Heart left ventricle (tissue), 16 donors: ENCODE measurements at regions of chr7 and their contacts with region 1.

Region 1: DNA sequence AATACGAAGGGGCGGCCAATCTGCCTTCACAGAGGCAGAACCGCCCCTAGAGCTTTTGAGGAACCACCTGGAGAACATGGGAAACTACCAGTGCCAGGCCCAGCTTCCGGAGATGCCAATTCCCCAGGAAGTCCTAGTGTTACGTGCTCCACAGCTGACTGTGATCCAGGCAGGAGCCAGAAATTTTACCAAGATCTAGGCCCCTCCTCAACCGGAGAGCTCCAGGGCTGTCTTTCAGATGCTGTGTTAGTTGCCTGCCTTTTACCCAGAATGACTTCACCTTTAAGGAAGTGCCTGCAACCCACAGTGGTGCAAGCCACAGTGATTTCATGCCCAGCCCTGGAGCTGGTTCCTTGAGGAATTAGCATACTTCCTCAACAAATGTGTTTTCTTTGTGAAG is 62.9 kb downstream of the ELMO1 start:
- DNase-seq: peak in 3 of 5 donors; percentile 27 to 60 (median 45)
- ATAC-seq: peak; percentile 40 to 70 (median 50)
- H3K4me3 ChIP-seq: no peak overlapping the region
- H3K27ac ChIP-seq: peak overlapping the region in 6 of 12 donors; percentile 9 to 51 (median 34)
- H3K4me1 ChIP-seq: peaks cover 0 to 51% (median 16%) of the 10 kb centered on the region in 12 donors
- H3K27me3 ChIP-seq: no peaks in the 10 kb centered on the region
- CTCF ChIP-seq: no peak
- POLR2A ChIP-seq: no peak

Region 2: GRCh38 chr7:37683246-37684120 is 297.7 kb after region 1 on chr7 and contains the start of gene GPR141:
- intact Hi-C with region 1: no loop called
- DNase-seq: no peak
- ATAC-seq: peak in 2 of 4 donors; percentile 45 to 48
- H3K4me3 ChIP-seq: peak within 1 kb of the TSS in 2 of 12 donors; percentile 18 to 42
- H3K27ac ChIP-seq: peak within 1 kb of the TSS in 1 of 12 donors; percentile 79
- H3K4me1 ChIP-seq: peaks cover 0 to 26% (median 0%) of the 10 kb centered on the region in 12 donors
- H3K27me3 ChIP-seq: no peaks in the 10 kb centered on the region
- CTCF ChIP-seq: no peak
- POLR2A ChIP-seq: no peak
- total RNA-seq, gene GPR141: 0.38 to 5.2 (median 0.54) TPM in 7 of 9 donors, not detected in the others

Region 3: DNA sequence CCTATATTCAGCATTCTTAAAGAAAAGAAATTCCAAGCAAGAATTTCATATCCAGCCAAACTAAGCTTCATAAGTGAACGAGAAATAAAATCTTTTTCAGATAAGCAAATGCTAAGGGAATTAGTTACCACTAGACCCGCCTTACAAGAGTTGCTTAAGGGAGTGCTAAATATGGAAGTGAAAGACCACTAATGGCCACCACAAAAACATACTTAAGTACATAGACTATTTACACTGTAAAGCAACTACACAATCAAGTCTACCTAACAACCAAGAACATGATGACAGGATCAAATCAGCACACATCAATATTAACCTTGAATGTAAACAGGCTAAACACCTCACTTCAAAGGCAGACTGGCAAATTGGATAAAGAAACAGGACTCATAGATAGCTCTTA is 420.4 kb after region 1 on chr7:
- intact Hi-C with region 1: loop called in 1 of 10 experiments (anchors 10 kb)
- DNase-seq: no peak
- ATAC-seq: no peak
- H3K4me3 ChIP-seq: no peak overlapping the region
- H3K27ac ChIP-seq: no peak overlapping the region
- H3K4me1 ChIP-seq: no peaks in the 10 kb centered on the region
- H3K27me3 ChIP-seq: no peaks in the 10 kb centered on the region
- CTCF ChIP-seq: no peak
- POLR2A ChIP-seq: no peak